Activated CD4-positive, alpha-beta memory T cell treated with anti-CD3 and anti-CD28 coated beads for 36 hours (primary cell): ENCODE measurements at regions of chr16 and their contacts with region 1.

Region 1: GRCh38 chr16:79601931-79602627 is 1.5 kb upstream of the MAF start:
- DNase-seq: peak; percentile 92
- H3K4me3 Mint-ChIP-seq: peak overlapping the region; percentile 96
- H3K27ac Mint-ChIP-seq: peak overlapping the region; percentile 98
- H3K4me1 Mint-ChIP-seq: peaks cover 38% of the 10 kb centered on the region
- H3K27me3 Mint-ChIP-seq: peaks cover 3% of the 10 kb centered on the region

Region 2: GRCh38 chr16:78705694-78706093 is 896.4 kb before region 1 on chr16:
- CTCF ChIA-PET with region 1: interaction called, 17 read pairs
- POLR2A ChIA-PET with region 1: no interaction called
- intact Hi-C with region 1: loop called (anchors 2 kb)
- DNase-seq: peak; percentile 51
- H3K4me3 Mint-ChIP-seq: no peak overlapping the region
- H3K27ac Mint-ChIP-seq: peak overlapping the region; percentile 87
- H3K4me1 Mint-ChIP-seq: peaks cover 16% of the 10 kb centered on the region
- H3K27me3 Mint-ChIP-seq: no peaks in the 10 kb centered on the region

Region 3: GRCh38 chr16:78962457-78962929 is 639.6 kb before region 1 on chr16:
- CTCF ChIA-PET with region 1: no interaction called
- POLR2A ChIA-PET with region 1: interaction called, 11 read pairs
- intact Hi-C with region 1: loop called (anchors 2 kb)
- DNase-seq: peak; percentile 52
- H3K4me3 Mint-ChIP-seq: peak overlapping the region; percentile 3
- H3K27ac Mint-ChIP-seq: peak overlapping the region; percentile 92
- H3K4me1 Mint-ChIP-seq: peaks cover 59% of the 10 kb centered on the region
- H3K27me3 Mint-ChIP-seq: no peaks in the 10 kb centered on the region

Region 4: GRCh38 chr16:79286646-79287423 is 315.2 kb before region 1 on chr16:
- CTCF ChIA-PET with region 1: interaction called, 3 read pairs
- POLR2A ChIA-PET with region 1: interaction called, 6 read pairs
- intact Hi-C with region 1: loop called (anchors 1 kb)
- DNase-seq: peak; percentile 69
- H3K4me3 Mint-ChIP-seq: peak overlapping the region; percentile 55
- H3K27ac Mint-ChIP-seq: peak overlapping the region; percentile 73
- H3K4me1 Mint-ChIP-seq: peaks cover 61% of the 10 kb centered on the region
- H3K27me3 Mint-ChIP-seq: no peaks in the 10 kb centered on the region

Region 5: GRCh38 chr16:79628501-79628975 is 26.5 kb after region 1 on chr16:
- CTCF ChIA-PET with region 1: interaction called, 4 read pairs
- POLR2A ChIA-PET with region 1: interaction called, 6 read pairs
- intact Hi-C with region 1: loop called (anchors 1 kb)
- DNase-seq: peak; percentile 91
- H3K4me3 Mint-ChIP-seq: no peak overlapping the region
- H3K27ac Mint-ChIP-seq: peak overlapping the region; percentile 76
- H3K4me1 Mint-ChIP-seq: peaks cover 41% of the 10 kb centered on the region
- H3K27me3 Mint-ChIP-seq: peaks cover 30% of the 10 kb centered on the region

Region 6: GRCh38 chr16:79845033-79845733 is 243.1 kb after region 1 on chr16:
- CTCF ChIA-PET with region 1: no interaction called
- POLR2A ChIA-PET with region 1: interaction called, 3 read pairs
- intact Hi-C with region 1: loop called (anchors 5 kb)
- DNase-seq: peak; percentile 58
- H3K4me3 Mint-ChIP-seq: peak overlapping the region; percentile 45
- H3K27ac Mint-ChIP-seq: peak overlapping the region; percentile 69
- H3K4me1 Mint-ChIP-seq: peaks cover 40% of the 10 kb centered on the region
- H3K27me3 Mint-ChIP-seq: peaks cover 5% of the 10 kb centered on the region